Activated B cell treated with CpG ODN at 0.5 μM for 24 hours (primary cell): ENCODE measurements at regions of chr6 and their contacts with region 1.

Region 1: DNA sequence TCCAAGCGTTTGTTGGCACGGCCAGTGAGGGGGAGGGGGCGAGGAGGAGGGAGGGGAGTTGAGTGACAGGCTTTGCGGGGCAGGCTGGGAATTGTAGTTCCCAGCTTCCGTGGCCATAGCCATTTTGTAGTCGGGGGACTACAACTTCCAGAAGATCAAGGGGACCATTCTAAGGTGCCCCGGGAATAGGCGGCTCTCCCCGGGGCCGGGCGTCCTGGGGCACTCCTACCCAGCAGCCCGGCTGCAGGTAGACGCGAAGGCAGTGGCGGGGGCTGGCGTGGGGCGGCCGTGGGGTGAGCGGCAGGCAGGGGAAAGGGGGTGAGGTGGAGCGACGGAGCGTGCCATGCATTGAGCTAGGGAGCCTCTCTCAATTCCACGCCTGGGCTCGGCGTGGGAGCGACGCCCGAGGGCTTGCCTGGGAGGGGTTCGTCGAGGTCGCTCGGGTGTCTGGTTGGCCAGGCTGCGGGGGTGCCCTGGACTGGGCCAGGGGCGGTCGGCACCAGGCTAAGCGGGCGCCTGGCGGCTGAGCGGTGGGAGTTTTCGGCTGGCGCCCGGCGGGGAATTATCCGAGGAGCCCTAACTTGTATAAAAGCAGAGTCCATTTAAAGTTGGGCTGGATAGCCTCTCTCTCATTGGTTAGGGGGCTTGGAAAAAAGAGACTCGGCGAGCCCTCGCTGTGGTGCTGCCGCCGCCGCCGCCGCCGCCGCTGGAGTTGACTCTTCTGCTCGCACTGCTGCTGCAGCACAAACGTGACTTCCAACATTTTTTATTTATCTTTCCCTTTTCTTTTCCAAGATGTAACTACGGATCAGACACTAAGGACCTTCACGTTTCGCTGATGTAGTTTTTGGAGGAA is at the start of gene JARID2:
- DNase-seq: peak; percentile 94
- ATAC-seq: peak; percentile 61
- H3K4me3 Mint-ChIP-seq: peak within 1 kb of the TSS; percentile 100
- H3K27ac Mint-ChIP-seq: peak within 1 kb of the TSS; percentile 96
- H3K4me1 Mint-ChIP-seq: peaks cover 32% of the 10 kb centered on the region
- H3K27me3 Mint-ChIP-seq: no peaks in the 10 kb centered on the region
- CTCF ChIP-seq: no peak
- total RNA-seq, gene JARID2: 27.0 and 28.5 TPM in 2 replicates

Region 2: GRCh38 chr6:13814176-13814937 is 1431.2 kb before region 1 on chr6 and contains the start of gene MCUR1:
- CTCF ChIA-PET with region 1: no interaction called
- POLR2A ChIA-PET with region 1: interaction called, 3 read pairs
- intact Hi-C with region 1: loop called (anchors 5 kb)
- DNase-seq: peak; percentile 81
- ATAC-seq: peak; percentile 83
- H3K4me3 Mint-ChIP-seq: peak within 1 kb of the TSS; percentile 91
- H3K27ac Mint-ChIP-seq: peak within 1 kb of the TSS; percentile 87
- H3K4me1 Mint-ChIP-seq: peaks cover 32% of the 10 kb centered on the region
- H3K27me3 Mint-ChIP-seq: no peaks in the 10 kb centered on the region
- CTCF ChIP-seq: no peak
- total RNA-seq, gene MCUR1: 13.6 and 14.1 TPM in 2 replicates

Region 3: DNA sequence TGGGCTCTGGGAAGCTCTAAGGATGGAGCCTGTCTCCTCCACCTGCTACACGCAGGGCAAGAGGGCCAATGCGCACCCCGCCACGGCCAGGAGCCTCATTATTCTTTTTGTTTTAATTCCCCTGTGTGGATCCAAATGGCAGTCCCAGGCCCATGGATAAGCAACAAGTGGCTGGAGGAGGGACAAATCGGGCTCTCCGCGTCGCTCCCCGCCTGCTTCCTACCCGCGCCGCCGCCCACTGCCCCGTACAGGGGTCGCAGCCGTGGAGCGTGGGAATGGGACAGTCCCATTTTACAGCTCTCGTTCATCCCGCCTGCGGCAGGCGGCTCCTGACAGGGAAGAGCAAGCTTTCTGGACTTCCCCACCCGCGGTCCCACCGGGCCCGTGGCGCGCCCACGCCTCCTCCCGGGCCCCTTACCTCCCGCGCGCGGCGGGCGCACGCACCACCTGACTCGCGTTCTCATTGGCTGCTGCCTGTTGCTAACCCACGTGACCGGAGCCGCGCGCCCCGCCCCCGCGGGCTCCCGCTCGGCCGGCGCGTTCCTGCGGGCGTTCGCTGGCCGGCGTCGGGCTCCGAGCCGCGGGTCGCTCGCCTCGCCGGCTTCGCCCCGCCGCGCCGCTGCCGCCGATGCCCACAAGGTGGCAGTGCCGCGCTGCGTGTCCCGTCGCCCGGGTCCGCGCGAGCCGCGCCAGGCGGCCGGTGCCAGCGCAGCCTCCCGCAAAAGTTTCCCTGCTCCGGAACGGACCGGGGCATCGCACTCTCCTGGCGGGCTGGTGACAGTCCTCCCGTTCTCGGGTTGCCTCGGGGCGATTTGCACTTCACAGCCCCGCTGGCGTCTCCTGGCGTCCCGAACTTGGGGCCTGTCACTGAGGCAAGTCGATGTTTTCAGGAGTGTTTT is 1034.7 kb before region 1 on chr6:
- CTCF ChIA-PET with region 1: interaction called, 3 read pairs
- POLR2A ChIA-PET with region 1: interaction called, 3 read pairs
- intact Hi-C with region 1: loop called (anchors 1 kb)
- DNase-seq: peak; percentile 98
- ATAC-seq: peak; percentile 90
- H3K4me3 Mint-ChIP-seq: peak overlapping the region; percentile 85
- H3K27ac Mint-ChIP-seq: peak overlapping the region; percentile 88
- H3K4me1 Mint-ChIP-seq: peaks cover 45% of the 10 kb centered on the region
- H3K27me3 Mint-ChIP-seq: no peaks in the 10 kb centered on the region
- CTCF ChIP-seq: no peak

Region 4: DNA sequence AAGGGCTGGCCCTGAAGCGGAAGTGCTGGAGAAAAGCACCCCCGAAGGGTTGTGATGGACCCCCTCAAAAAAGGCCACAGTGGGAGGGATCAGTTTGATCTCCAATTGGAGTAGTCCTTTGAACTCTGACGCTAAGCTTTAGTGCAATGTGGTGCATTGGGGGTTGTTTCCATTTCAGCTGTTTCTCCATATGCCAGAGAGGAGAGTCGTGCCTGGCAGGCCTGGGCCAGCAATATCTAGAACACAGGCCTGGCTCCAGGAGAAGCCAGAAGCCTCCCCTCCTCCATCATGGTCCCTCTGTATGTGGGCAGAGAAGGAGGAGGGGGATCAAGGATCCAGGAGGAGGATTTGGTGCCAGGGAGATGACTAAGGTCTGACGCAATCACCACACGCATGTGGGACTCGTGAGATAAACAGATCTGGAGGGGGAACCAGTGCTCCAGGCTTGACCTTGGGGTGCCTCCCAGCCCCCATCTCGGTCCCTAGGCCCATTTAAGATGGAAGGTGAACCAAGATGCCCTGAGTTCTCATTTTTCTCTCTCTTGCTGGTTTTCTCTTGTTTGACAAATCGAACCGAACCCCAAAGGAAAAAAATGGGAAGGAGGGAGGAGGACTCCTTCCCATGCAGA is 517.1 kb before region 1 on chr6:
- CTCF ChIA-PET with region 1: no interaction called
- POLR2A ChIA-PET with region 1: interaction called, 4 read pairs
- intact Hi-C with region 1: loop called (anchors 2 kb)
- DNase-seq: no peak
- ATAC-seq: no peak
- H3K4me3 Mint-ChIP-seq: peak overlapping the region; percentile 73
- H3K27ac Mint-ChIP-seq: peak overlapping the region; percentile 95
- H3K4me1 Mint-ChIP-seq: peaks cover 75% of the 10 kb centered on the region
- H3K27me3 Mint-ChIP-seq: no peaks in the 10 kb centered on the region
- CTCF ChIP-seq: no peak

Region 5: DNA sequence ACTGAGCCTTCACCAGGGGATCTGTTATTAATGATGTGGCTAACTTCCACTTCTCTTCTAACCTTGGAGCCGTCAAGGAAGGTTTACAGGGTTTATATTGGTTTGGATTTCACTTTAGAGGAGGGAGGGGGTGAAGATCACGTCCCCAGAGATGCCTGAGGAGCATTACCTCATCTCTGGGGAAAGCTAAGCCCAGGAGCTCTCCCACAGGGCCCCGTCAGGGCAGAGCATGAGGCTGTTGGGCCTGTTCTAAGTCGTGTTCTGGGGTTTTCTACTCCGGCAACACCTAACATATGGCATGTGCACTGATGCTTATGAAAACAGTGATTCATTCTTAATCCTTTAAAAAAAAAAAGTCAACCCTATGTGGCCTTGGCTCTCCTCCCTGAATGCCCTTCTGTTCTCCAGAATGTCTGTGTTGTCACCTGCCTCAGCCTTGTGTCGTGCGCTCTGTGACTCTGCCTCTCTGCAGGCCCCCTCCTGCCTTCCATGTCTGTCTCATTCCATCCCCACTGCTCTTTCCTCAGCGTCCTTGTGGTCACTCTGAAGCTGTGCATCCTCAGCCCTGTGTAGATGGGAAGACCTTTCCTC is 97.1 kb before region 1 on chr6:
- CTCF ChIA-PET with region 1: no interaction called
- POLR2A ChIA-PET with region 1: no interaction called
- intact Hi-C with region 1: loop called (anchors 1 kb)
- DNase-seq: no peak
- ATAC-seq: peak; percentile 62
- H3K4me3 Mint-ChIP-seq: no peak overlapping the region
- H3K27ac Mint-ChIP-seq: peak overlapping the region; percentile 38
- H3K4me1 Mint-ChIP-seq: peaks cover 41% of the 10 kb centered on the region
- H3K27me3 Mint-ChIP-seq: no peaks in the 10 kb centered on the region
- CTCF ChIP-seq: no peak

Region 6: GRCh38 chr6:15464211-15464725 is 218.7 kb after region 1 on chr6:
- CTCF ChIA-PET with region 1: no interaction called
- POLR2A ChIA-PET with region 1: no interaction called
- intact Hi-C with region 1: loop called (anchors 5 kb)
- DNase-seq: peak; percentile 24
- ATAC-seq: peak; percentile 72
- H3K4me3 Mint-ChIP-seq: no peak overlapping the region
- H3K27ac Mint-ChIP-seq: no peak overlapping the region
- H3K4me1 Mint-ChIP-seq: peaks cover 40% of the 10 kb centered on the region
- H3K27me3 Mint-ChIP-seq: no peaks in the 10 kb centered on the region
- CTCF ChIP-seq: peak; percentile 53